ENCODE measurements at regions of chr4 and their contacts with region 1.

Region 1: GRCh38 chr4:76733068-76733771 is 164.7 kb downstream of the SOWAHB start:
- DNase-seq: peak; percentile 68
- ATAC-seq: peak; percentile 87
- H3K4me3 Mint-ChIP-seq: no peak overlapping the region
- H3K27ac Mint-ChIP-seq: peak overlapping the region; percentile 87
- H3K4me1 Mint-ChIP-seq: peaks cover 52% of the 10 kb centered on the region
- H3K27me3 Mint-ChIP-seq: no peaks in the 10 kb centered on the region
- CTCF ChIP-seq: no peak

Region 2: GRCh38 chr4:76720121-76720520 is 13.1 kb before region 1 on chr4:
- CTCF ChIA-PET with region 1: interaction called, 10 read pairs
- POLR2A ChIA-PET with region 1: no interaction called
- DNase-seq: no peak
- ATAC-seq: no peak
- H3K4me3 Mint-ChIP-seq: no peak overlapping the region
- H3K27ac Mint-ChIP-seq: no peak overlapping the region
- H3K4me1 Mint-ChIP-seq: peaks cover 68% of the 10 kb centered on the region
- H3K27me3 Mint-ChIP-seq: no peaks in the 10 kb centered on the region
- CTCF ChIP-seq: no peak